Esophagus squamous epithelium (tissue), 5 donors: ENCODE measurements at regions of chr2 and their contacts with region 1.

Region 1: GRCh38 chr2:63861220-63861822 is 19.6 kb downstream of the UGP2 start:
- DNase-seq: no peak
- H3K4me3 ChIP-seq: no peak overlapping the region
- H3K27ac ChIP-seq: no peak overlapping the region
- H3K4me1 ChIP-seq: peaks cover 0 to 13% (median 0%) of the 10 kb centered on the region in 3 donors
- H3K27me3 ChIP-seq: no peaks in the 10 kb centered on the region
- CTCF ChIP-seq: peak in 5 of 6 experiments; percentile 49 to 63 (median 52)
- POLR2A ChIP-seq: no peak

Region 2: GRCh38 chr2:63698825-63699548 is 162.3 kb before region 1 on chr2:
- intact Hi-C with region 1: loop called (anchors 10 kb)
- DNase-seq: no peak
- H3K4me3 ChIP-seq: no peak overlapping the region
- H3K27ac ChIP-seq: peak overlapping the region in 3 of 4 donors; percentile 50 to 70 (median 56)
- H3K4me1 ChIP-seq: peaks cover 0 to 13% (median 0%) of the 10 kb centered on the region in 3 donors
- H3K27me3 ChIP-seq: no peaks in the 10 kb centered on the region
- CTCF ChIP-seq: peak in 4 of 6 experiments; percentile 32 to 50 (median 40)
- POLR2A ChIP-seq: no peak